Left cardiac atrium (tissue), 4 donors: ENCODE measurements at regions of chr12 and their contacts with region 1.

Region 1: DNA sequence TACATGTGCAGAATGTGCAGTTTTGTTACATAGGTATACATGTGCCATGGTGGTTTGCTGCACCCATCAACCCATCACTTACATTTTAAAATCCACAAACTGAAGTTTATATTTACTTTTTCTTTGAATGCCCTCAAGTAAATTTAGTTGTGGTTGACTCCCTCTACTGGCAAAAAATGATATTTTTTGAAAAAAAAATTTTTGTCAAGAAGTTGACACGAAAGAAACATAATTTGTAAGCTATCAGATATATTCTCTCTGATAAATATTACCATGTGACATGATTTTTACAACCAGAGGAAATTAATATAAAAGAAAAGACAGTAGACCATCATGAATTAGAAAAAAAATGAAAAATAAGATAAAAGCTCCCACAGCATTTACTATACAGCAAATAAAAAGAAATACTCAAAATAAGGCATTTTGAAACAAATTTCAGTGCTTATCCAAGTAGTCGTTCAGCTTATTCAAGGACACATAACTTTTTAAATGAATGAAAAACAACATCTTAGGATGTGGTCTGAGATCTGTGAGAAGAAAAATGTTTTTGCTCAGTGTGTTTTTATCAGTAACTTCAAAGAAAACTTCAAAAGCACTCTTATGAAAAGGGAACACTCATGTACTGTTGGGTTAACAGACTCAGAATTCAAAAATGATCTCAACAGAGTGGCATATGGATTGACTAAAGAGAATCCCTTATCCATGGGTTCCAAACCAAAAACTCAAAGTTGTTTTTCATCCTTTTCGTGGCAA is 30.0 kb upstream of the GRIP1 start:
- DNase-seq: no peak
- ATAC-seq: no peak

Region 2: DNA sequence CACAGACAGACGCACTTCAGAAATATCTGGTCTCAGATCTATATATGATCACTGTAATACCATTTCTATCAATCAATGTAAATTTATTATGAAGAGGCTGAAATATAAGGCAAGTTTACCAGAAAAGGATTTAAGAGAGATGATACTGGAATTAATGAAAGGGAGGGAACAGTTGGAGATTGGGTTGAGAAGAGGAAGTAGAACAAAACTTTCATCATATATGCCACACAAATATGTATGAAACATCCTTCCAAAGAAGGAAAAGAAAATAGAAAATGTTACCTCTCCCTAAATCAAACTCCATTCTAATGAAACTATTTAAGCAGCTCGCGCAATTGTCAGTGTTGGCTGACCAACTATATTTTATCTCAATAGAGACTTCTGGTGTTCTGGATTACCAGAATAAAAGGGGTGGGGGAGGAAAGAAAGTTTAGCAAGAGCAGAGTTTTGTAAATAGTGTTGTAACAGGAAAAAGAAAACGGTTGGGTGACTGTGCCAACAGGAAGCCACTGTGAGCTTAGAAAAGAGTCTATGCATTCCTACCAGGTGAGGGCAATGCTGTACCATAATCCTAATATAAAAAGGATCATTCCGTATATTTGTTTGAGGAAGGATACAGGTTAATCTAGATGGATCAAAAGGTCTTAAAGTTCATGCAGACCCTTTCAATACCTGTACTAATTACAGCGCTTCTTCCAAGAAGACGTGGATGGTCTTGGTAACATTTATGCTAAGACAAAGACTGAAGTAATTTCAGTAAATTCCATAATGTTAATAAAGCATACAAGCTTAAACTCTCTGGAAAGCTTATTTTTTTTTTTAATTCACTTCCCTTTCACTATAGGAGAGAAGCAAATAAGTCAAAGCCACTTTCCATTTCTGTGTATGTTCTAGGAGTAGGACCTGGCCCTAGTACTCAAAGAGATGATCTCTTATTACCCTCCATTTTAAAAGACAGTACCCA is 563.8 kb before region 1 on chr12:
- intact Hi-C with region 1: loop called in 1 of 2 experiments (anchors 10 kb)
- DNase-seq: peak; percentile 51
- ATAC-seq: peak; percentile 90 to 92